A549 (cell line): ENCODE measurements at regions of chr2 and their contacts with region 1.

Region 1: DNA sequence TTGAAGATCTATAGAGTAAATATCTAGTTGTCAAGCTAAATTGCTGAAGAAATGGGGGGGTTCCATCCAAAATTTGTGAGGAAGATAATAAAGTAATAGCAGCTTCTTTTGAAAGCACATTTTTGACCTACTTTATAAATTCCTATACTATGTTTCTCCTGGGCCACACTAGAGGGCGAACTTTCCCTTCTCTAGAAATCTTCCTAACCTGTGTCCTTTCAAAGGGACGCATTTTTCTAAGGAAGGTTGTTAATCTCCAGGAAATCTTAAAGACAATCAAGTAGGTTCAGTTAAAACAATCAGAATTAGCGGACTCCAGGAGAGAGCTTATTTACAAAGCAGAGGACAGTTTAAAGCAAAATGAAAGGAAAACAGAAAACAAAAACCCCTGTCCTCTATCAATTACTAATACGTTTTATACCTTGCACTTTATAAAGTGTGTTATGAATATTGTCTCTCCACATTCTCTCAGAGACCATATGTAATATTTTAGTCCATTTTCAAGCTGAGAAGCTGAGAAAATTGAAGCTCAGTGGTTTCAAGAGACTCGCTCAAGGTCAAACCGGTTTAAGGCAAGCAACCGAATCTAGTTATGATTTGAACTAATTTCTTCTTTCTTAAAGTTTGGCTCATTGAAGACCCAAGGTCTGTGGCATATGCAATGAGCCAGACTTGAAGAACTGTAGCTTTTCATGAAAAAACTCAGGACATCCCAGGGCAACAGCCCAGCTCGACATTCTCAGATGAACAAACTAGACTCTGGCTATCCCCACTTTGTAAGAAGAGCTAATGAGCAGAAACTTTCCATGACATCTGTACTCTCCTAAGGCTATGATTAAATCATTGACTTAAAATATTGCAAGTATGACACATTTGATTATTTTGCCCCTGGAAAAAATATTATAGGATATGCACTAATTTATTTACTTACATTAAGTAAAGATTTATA is 273.6 kb downstream of the PAX3 start:
- DNase-seq: peak; percentile 8 to 57
- ATAC-seq: peak; percentile 80 to 81; a peak in 5 of 6 replicates
- H3K4me3 ChIP-seq: no peak overlapping the region
- H3K27ac ChIP-seq: no peak overlapping the region
- H3K4me1 ChIP-seq: no peaks in the 10 kb centered on the region
- CTCF ChIP-seq: peak; percentile 75
- EP300 ChIP-seq: no peak
- POLR2A ChIP-seq: no peak
- RAD21 ChIP-seq: peak; percentile 64 to 67

Region 2: GRCh38 chr2:222013889-222014288 is 11.3 kb before region 1 on chr2:
- CTCF ChIA-PET with region 1: interaction called, 12 read pairs
- POLR2A ChIA-PET with region 1: no interaction called
- DNase-seq: no peak
- ATAC-seq: no peak
- H3K4me3 ChIP-seq: no peak overlapping the region
- H3K27ac ChIP-seq: no peak overlapping the region
- H3K4me1 ChIP-seq: no peaks in the 10 kb centered on the region
- CTCF ChIP-seq: no peak
- EP300 ChIP-seq: no peak
- POLR2A ChIP-seq: no peak
- RAD21 ChIP-seq: no peak

Region 3: DNA sequence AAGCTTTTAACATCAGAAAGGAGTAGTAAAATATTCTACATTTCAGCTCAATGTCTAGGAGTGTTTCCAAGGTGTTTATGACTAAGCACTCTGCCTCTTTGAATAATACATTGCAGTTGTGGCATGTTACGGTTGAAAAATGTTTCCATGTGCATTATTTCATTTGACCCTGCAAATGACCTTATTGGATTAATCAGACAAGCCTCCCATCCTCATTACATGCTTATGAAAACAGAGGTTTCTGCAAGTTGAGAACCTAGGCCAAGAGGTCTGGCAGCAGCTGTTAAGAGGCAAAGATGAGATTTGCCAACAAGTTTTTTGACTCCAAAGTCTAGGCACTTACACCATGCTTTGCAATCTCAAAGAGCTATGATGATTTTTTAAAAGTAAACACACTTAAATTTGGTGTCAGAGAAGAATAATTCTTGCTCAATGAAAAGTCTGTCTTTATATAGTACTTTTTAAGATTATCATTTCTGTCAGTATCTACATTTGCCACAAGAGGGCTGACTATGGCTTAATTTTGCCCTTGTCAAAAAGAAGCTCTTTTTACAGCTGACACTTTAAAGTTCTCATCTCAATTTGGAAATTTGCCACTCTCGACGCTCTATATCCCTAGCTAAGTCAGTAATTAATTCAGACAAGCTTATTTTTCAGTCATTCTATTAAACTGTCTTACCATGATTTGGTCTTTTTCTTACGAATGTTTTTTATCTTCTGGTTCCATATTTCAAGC is 13.0 kb after region 1 on chr2:
- CTCF ChIA-PET with region 1: interaction called, 20 read pairs
- POLR2A ChIA-PET with region 1: no interaction called
- DNase-seq: no peak
- ATAC-seq: peak in 1 of 2 experiments; percentile 43; a peak in 1 of 6 replicates
- H3K4me3 ChIP-seq: no peak overlapping the region
- H3K27ac ChIP-seq: no peak overlapping the region
- H3K4me1 ChIP-seq: no peaks in the 10 kb centered on the region
- CTCF ChIP-seq: peak; percentile 35; the same call in 2 of the 3 replicates
- EP300 ChIP-seq: no peak
- POLR2A ChIP-seq: no peak
- RAD21 ChIP-seq: no peak

Region 4: GRCh38 chr2:222043891-222044290 is 18.7 kb after region 1 on chr2:
- CTCF ChIA-PET with region 1: interaction called, 18 read pairs
- POLR2A ChIA-PET with region 1: no interaction called
- DNase-seq: no peak
- ATAC-seq: no peak
- H3K4me3 ChIP-seq: no peak overlapping the region
- H3K27ac ChIP-seq: no peak overlapping the region
- H3K4me1 ChIP-seq: no peaks in the 10 kb centered on the region
- CTCF ChIP-seq: no peak
- EP300 ChIP-seq: no peak
- POLR2A ChIP-seq: no peak
- RAD21 ChIP-seq: no peak